ENCODE measurements at regions of chr18 and their contacts with region 1.

Region 1: DNA sequence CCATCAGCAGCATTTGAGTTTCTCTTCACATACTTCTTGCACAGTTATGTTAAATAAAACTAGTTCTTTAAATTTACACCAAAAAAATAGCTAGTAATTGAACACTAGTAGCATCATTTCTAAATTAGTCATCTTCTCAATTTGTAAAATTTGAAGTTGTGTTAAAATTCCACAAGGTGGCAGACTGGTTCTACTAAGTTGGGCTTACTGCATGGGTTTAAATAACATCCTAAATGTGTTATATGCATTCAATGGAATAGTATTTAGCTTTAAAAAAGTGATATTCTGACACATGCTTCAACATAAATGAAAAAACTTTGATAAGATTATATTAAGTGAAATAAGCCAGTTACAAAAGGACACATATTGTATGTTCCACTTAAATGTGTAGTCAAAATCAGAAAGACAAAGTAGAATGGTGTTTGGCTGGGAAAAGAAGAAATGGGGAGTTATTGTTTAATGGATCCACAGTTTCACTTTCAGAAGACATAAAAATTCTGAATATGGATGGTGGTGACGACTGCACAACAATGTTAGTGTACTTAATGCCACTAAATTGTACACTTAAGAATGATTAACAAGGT is 28.7 kb upstream of the RPRD1A start:
- DNase-seq: no peak
- ATAC-seq: no peak
- H3K4me3 Mint-ChIP-seq: no peak overlapping the region
- H3K27ac Mint-ChIP-seq: no peak overlapping the region
- H3K4me1 Mint-ChIP-seq: no peaks in the 10 kb centered on the region
- H3K27me3 Mint-ChIP-seq: peaks cover 5% of the 10 kb centered on the region
- CTCF ChIP-seq: no peak

Region 2: GRCh38 chr18:34514238-34514637 is 1581.8 kb before region 1 on chr18:
- CTCF ChIA-PET with region 1: no interaction called
- POLR2A ChIA-PET with region 1: no interaction called
- intact Hi-C with region 1: no loop called
- DNase-seq: no peak
- ATAC-seq: no peak
- H3K4me3 Mint-ChIP-seq: no peak overlapping the region
- H3K27ac Mint-ChIP-seq: no peak overlapping the region
- H3K4me1 Mint-ChIP-seq: no peaks in the 10 kb centered on the region
- H3K27me3 Mint-ChIP-seq: no peaks in the 10 kb centered on the region
- CTCF ChIP-seq: no peak

Region 3: GRCh38 chr18:35231052-35231451 is 865.0 kb before region 1 on chr18:
- CTCF ChIA-PET with region 1: no interaction called
- POLR2A ChIA-PET with region 1: no interaction called
- intact Hi-C with region 1: no loop called
- DNase-seq: peak; percentile 49
- ATAC-seq: peak; percentile 97
- H3K4me3 Mint-ChIP-seq: peak overlapping the region; percentile 36
- H3K27ac Mint-ChIP-seq: no peak overlapping the region
- H3K4me1 Mint-ChIP-seq: peaks cover 3% of the 10 kb centered on the region
- H3K27me3 Mint-ChIP-seq: no peaks in the 10 kb centered on the region
- CTCF ChIP-seq: peak; percentile 75

Region 4: GRCh38 chr18:36411745-36412168 is 315.7 kb after region 1 on chr18:
- CTCF ChIA-PET with region 1: no interaction called
- POLR2A ChIA-PET with region 1: no interaction called
- intact Hi-C with region 1: loop called (anchors 5 kb)
- DNase-seq: no peak
- ATAC-seq: no peak
- H3K4me3 Mint-ChIP-seq: no peak overlapping the region
- H3K27ac Mint-ChIP-seq: no peak overlapping the region
- H3K4me1 Mint-ChIP-seq: no peaks in the 10 kb centered on the region
- H3K27me3 Mint-ChIP-seq: peaks cover 2% of the 10 kb centered on the region
- CTCF ChIP-seq: no peak

Region 5: GRCh38 chr18:36519358-36519757 is 423.3 kb after region 1 on chr18:
- CTCF ChIA-PET with region 1: no interaction called
- POLR2A ChIA-PET with region 1: no interaction called
- intact Hi-C with region 1: no loop called
- DNase-seq: no peak
- ATAC-seq: no peak
- H3K4me3 Mint-ChIP-seq: no peak overlapping the region
- H3K27ac Mint-ChIP-seq: no peak overlapping the region
- H3K4me1 Mint-ChIP-seq: no peaks in the 10 kb centered on the region
- H3K27me3 Mint-ChIP-seq: peaks cover 13% of the 10 kb centered on the region
- CTCF ChIP-seq: no peak

Measured in activated B cell treated with CpG ODN at 0.5 μM for 24 hours (primary cell).